Heart left ventricle (tissue), 16 donors: ENCODE measurements at regions of chr3 and their contacts with region 1.

Region 1: GRCh38 chr3:98893740-98894139 is 7.8 kb downstream of the DCBLD2 start:
- DNase-seq: no peak
- ATAC-seq: peak in 3 of 4 donors; percentile 58 to 63 (median 59)
- H3K4me3 ChIP-seq: no peak overlapping the region
- H3K27ac ChIP-seq: peak overlapping the region in 3 of 12 donors; percentile 4 to 15 (median 15)
- H3K4me1 ChIP-seq: peaks cover 3 to 85% (median 46%) of the 10 kb centered on the region in 12 donors
- H3K27me3 ChIP-seq: no peaks in the 10 kb centered on the region
- CTCF ChIP-seq: no peak
- POLR2A ChIP-seq: no peak

Region 2: DNA sequence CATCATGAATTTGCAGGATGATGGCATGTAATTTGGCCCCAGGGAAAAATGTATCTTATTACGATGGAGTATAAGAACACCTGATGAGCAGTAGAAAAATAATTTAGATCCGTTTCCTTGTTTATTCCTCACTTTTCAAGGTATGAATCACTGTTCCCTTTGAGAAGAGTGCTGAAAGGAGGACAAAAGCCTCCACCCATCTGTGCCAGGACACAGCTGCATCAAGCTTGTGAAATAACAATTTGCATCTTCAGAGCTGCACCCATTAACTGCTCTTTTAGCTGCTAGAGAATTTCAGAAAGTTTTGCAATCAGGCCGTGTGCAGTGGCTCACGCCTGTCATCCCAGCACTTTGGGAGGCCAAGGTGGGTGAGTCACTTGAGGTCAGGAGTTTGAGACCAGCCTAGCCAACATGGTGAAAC is 380.6 kb before region 1 on chr3:
- intact Hi-C with region 1: no loop called
- DNase-seq: no peak
- ATAC-seq: peak in 2 of 4 donors; percentile 33 to 56
- H3K4me3 ChIP-seq: no peak overlapping the region
- H3K27ac ChIP-seq: no peak overlapping the region
- H3K4me1 ChIP-seq: peaks cover 0 to 10% (median 0%) of the 10 kb centered on the region in 12 donors
- H3K27me3 ChIP-seq: no peaks in the 10 kb centered on the region
- CTCF ChIP-seq: no peak
- POLR2A ChIP-seq: no peak

Region 3: GRCh38 chr3:98705706-98706105 is 188.0 kb before region 1 on chr3:
- intact Hi-C with region 1: no loop called
- DNase-seq: no peak
- ATAC-seq: no peak
- H3K4me3 ChIP-seq: no peak overlapping the region
- H3K27ac ChIP-seq: no peak overlapping the region
- H3K4me1 ChIP-seq: peaks cover 0 to 27% (median 10%) of the 10 kb centered on the region in 12 donors
- H3K27me3 ChIP-seq: no peaks in the 10 kb centered on the region
- CTCF ChIP-seq: peak in 2 of 12 donors; percentile 17 to 25
- POLR2A ChIP-seq: no peak

Region 4: DNA sequence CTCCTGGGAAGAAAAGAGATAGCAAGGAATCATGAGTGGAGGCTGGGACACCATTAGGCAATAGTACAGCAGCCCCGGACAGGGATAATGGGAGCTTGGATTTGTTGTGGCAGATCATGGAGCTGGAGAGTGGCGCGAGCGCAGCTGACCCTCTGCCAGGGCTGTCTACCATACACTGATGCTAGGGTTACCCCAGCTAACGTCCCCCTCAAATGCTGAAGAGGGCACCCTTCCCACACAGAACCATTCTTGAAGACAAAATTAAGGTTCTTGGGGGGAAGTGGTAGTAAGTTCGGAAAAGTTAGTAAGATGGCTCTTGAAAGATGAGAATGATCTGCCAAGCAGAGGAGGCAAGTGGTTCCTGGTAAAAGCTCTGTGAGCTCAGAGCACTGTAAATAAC is 69.5 kb before region 1 on chr3:
- intact Hi-C with region 1: loop called in 1 of 10 experiments (anchors 10 kb)
- DNase-seq: no peak
- ATAC-seq: peak in 2 of 4 donors; percentile 16 to 31
- H3K4me3 ChIP-seq: no peak overlapping the region
- H3K27ac ChIP-seq: no peak overlapping the region
- H3K4me1 ChIP-seq: peaks cover 0 to 27% (median 5%) of the 10 kb centered on the region in 12 donors
- H3K27me3 ChIP-seq: no peaks in the 10 kb centered on the region
- CTCF ChIP-seq: peak in 2 of 12 donors; percentile 24 to 28
- POLR2A ChIP-seq: no peak

Region 5: DNA sequence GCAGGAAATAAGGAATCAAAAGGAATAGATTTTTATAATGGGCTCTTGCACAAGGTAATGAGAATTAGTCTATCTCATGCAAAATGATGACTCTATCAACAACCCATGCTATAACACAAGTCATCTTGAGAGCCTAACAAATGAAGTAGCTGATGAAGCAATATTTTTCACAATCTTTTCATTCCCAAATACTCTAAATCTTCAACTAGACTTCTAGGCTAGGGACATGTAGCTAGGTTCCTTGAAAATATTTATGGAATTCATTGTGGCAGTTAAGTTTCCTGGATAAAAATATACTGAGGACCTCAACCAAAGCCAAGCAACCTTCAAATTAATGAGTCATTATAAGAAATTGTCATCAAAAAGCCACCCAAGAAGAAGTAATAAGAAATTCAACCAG is 47.6 kb before region 1 on chr3:
- intact Hi-C with region 1: loop called in 1 of 10 experiments (anchors 10 kb)
- DNase-seq: no peak
- ATAC-seq: no peak
- H3K4me3 ChIP-seq: no peak overlapping the region
- H3K27ac ChIP-seq: no peak overlapping the region
- H3K4me1 ChIP-seq: peaks cover 0 to 16% (median 2%) of the 10 kb centered on the region in 12 donors
- H3K27me3 ChIP-seq: no peaks in the 10 kb centered on the region
- CTCF ChIP-seq: no peak
- POLR2A ChIP-seq: no peak

Region 6: DNA sequence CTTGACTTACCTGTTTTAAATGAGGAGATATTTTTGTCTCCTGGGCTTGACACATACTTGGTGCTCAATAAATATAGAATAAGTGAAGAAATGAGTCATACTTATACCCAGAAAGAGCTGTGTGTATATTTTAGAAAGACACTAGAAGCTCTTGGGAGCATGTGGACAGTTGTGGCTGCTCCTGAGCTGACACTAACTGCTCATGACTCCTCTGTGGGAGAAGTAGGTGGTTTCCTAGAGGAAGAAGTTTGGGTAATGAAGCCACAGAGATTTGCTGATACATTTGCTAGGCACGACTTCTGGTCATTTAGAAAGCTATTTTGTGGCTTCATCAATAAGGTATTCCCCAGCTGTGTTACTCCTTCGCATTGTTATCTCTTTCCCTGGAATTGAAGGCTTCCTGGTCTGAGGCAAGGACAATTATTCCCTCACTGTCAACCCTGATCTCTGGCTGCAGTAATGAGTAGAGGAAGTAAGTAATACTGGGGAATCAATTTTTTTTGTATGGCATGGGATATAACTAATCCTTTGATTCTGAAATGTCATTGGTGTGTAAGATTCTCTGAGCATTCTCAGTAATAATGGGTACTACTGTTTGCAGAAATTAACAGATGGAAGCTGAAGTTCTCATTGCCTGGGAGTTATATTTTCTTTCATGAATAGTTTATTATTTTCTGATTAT is 87.3 kb after region 1 on chr3:
- intact Hi-C with region 1: loop called in 1 of 10 experiments (anchors 10 kb)
- DNase-seq: no peak
- ATAC-seq: no peak
- H3K4me3 ChIP-seq: no peak overlapping the region
- H3K27ac ChIP-seq: no peak overlapping the region
- H3K4me1 ChIP-seq: peaks cover 0 to 19% (median 0%) of the 10 kb centered on the region in 12 donors
- H3K27me3 ChIP-seq: no peaks in the 10 kb centered on the region
- CTCF ChIP-seq: no peak
- POLR2A ChIP-seq: no peak

Region 7: DNA sequence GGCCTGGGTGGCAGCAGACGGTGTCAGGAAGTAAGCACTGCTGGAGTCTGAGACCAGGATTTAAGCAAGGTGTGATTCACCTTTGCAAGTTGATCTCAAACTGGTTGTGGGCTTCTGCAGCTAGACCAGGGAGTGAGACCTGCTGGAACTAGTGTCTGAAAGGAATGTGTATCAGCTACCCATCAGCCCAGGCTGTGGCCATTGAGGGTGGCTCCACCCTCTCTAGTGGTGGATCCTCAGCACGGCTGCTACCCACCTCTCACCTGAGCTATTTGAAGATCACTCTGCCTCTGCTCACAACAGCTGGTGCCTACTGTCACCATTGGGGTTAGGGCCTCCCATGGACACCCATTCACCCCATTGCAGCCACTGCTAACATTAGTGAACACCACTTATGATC is 148.0 kb after region 1 on chr3:
- intact Hi-C with region 1: no loop called
- DNase-seq: no peak
- ATAC-seq: no peak
- H3K4me3 ChIP-seq: no peak overlapping the region
- H3K27ac ChIP-seq: no peak overlapping the region
- H3K4me1 ChIP-seq: no peaks in the 10 kb centered on the region
- H3K27me3 ChIP-seq: no peaks in the 10 kb centered on the region
- CTCF ChIP-seq: no peak
- POLR2A ChIP-seq: no peak